CD8-positive, alpha-beta T cell (primary cell): ENCODE measurements at regions of chr6 and their contacts with region 1.

Region 1: DNA sequence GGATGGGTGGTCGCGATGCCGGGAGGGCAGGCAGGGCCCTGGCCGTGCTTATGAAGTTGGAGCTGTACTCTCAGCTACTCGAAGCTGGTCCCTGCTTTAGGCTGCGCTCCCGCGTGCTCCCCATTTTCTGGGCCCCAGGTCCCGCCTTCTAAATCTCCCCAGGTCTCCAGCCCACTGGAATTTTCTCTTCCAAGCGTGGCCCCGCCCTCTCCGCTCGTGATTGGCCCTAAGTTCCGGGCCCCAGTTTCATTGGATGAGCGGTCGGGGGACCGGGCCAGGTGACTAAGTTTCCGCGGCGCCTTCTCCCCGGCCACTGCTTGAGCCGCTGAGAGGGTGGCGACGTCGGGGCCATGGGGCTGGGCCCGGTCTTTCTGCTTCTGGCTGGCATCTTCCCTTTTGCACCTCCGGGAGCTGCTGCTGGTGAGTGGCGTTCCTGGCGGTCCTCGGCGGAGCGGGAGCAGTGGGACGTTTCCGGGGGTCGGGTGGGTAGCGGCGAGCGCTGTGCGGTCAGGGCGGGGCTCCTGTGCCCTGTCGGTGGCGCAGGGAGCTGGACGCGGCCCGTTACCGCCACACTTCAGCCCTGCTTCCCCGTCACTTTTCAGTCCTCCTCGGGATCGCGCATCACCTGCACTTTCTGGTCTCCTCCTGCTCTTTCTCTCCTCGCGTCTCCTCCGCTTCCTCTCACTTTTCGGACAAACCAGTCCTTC is at the start of gene MICA:
- DNase-seq: peak in 8 of 9 experiments; percentile 46 to 85 (median 70)
- ATAC-seq: peak; percentile 50
- H3K4me3 ChIP-seq: peak within 1 kb of the TSS; percentile 67
- H3K4me3 Mint-ChIP-seq: peak within 1 kb of the TSS; percentile 94
- H3K27ac ChIP-seq: peak within 1 kb of the TSS; percentile 18 to 85
- H3K27ac Mint-ChIP-seq: peak within 1 kb of the TSS; percentile 92
- H3K4me1 ChIP-seq: peaks cover 34% of the 10 kb centered on the region
- H3K4me1 Mint-ChIP-seq: peaks cover 69% of the 10 kb centered on the region
- H3K27me3 ChIP-seq: no peaks in the 10 kb centered on the region
- H3K27me3 Mint-ChIP-seq: no peaks in the 10 kb centered on the region
- CTCF ChIP-seq: no peak
- total RNA-seq, gene MICA: 5.8 to 6.2 TPM

Region 2: DNA sequence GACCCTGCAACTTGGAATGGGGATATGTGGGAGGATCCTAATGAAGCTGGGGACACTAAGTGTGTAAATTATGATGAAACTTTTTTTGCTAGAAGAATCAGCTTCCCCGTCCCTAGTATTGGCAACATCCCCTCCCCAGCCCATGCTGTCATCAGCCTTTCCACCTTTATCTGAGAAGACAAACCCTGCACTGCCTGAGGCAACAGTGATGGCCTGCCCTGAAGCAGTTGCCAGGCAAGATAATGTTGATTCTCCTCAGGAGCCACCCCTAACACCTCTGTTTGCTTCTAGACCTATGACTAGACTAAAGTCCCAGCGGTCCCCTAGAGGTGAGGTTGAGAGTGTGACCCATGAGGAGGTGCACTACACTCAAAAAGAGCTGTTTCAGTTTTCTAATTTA is 27.0 kb after region 1 on chr6:
- CTCF ChIA-PET with region 1: interaction called, 27 read pairs
- POLR2A ChIA-PET with region 1: no interaction called
- intact Hi-C with region 1: no loop called
- DNase-seq: peak in 2 of 9 experiments; percentile 20 to 36
- ATAC-seq: no peak
- H3K4me3 ChIP-seq: no peak overlapping the region
- H3K4me3 Mint-ChIP-seq: no peak overlapping the region
- H3K27ac ChIP-seq: no peak overlapping the region
- H3K27ac Mint-ChIP-seq: no peak overlapping the region
- H3K4me1 ChIP-seq: no peaks in the 10 kb centered on the region
- H3K4me1 Mint-ChIP-seq: no peaks in the 10 kb centered on the region
- H3K27me3 ChIP-seq: no peaks in the 10 kb centered on the region
- H3K27me3 Mint-ChIP-seq: no peaks in the 10 kb centered on the region
- CTCF ChIP-seq: no peak

Region 3: DNA sequence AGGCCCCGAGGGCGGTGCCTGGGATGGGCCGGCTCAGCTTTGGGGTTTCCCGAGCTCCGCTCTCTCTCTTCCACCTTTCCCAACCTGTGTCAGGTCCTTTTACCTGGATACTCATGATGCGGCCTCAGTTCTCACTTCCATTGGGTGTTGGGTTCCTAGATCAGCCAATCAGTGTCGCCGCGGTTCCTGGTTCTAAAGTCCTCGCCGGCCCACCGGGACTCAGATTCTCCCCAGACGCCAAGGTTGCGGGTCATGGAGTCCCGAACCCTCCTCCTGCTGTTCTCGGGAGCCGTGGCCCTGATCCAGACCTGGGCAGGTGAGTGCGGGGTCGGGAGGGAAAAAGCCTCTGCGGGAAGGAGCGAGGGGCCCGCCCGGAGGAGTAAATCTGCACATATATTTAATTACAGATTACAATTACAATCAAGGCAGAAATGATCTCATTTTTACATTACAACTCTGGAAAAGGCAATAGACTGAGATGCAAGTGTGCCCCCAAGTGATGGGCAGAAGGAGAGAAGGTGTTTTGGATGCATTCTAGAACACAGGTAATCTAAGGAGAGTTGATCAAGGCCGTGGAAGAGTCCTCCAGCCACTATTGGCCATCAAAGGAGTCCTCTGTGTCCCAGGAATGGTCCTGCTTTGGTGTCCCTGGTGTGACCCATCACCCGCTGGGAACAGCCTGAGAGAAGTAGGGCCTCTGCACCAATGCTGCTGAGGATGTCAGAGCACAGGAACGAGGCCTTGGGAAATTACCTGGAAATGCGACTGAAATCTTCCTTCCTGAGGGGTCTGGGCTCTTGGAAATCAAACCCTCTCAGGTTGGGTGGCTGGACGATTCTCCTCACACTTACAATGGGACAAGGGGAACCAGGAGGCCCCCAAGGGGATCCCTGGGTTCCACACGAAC is 59.8 kb after region 1 on chr6:
- CTCF ChIA-PET with region 1: no interaction called
- POLR2A ChIA-PET with region 1: interaction called, 4 read pairs
- intact Hi-C with region 1: loop called (anchors 1 to 2 kb)
- DNase-seq: peak; percentile 81 to 98 (median 90)
- ATAC-seq: peak; percentile 93
- H3K4me3 ChIP-seq: peak overlapping the region; percentile 80 to 82
- H3K4me3 Mint-ChIP-seq: peak overlapping the region; percentile 100
- H3K27ac ChIP-seq: peak overlapping the region; percentile 89 to 98
- H3K27ac Mint-ChIP-seq: peak overlapping the region; percentile 98
- H3K4me1 ChIP-seq: peaks cover 48% of the 10 kb centered on the region
- H3K4me1 Mint-ChIP-seq: peaks cover 67% of the 10 kb centered on the region
- H3K27me3 ChIP-seq: no peaks in the 10 kb centered on the region
- H3K27me3 Mint-ChIP-seq: no peaks in the 10 kb centered on the region
- CTCF ChIP-seq: no peak